Natural killer cell (primary cell): ENCODE measurements at regions of chr1 and their contacts with region 1.

Region 1: GRCh38 chr1:154936555-154937084 is at the start of gene PMVK:
- DNase-seq: peak; percentile 91 to 98
- ATAC-seq: peak; percentile 86 to 97 (median 87)
- H3K4me3 ChIP-seq: peak within 1 kb of the TSS; percentile 85
- H3K4me3 Mint-ChIP-seq: peak within 1 kb of the TSS; percentile 100
- H3K27ac ChIP-seq: peak within 1 kb of the TSS; percentile 97
- H3K27ac Mint-ChIP-seq: peak within 1 kb of the TSS; percentile 99 to 100
- H3K4me1 ChIP-seq: peaks cover 36% of the 10 kb centered on the region
- H3K4me1 Mint-ChIP-seq: peaks cover 19 to 40% of the 10 kb centered on the region in 2 donors
- H3K27me3 ChIP-seq: no peaks in the 10 kb centered on the region
- H3K27me3 Mint-ChIP-seq: no peaks in the 10 kb centered on the region
- CTCF ChIP-seq: no peak
- total RNA-seq, gene PMVK: 9.0 to 12.1 (median 11.0) TPM

Region 2: GRCh38 chr1:154955718-154956543 is 19.3 kb after region 1 on chr1 and contains the start of gene PBXIP1:
- intact Hi-C with region 1: loop called (anchors 1 kb)
- DNase-seq: peak; percentile 79 to 95
- ATAC-seq: peak; percentile 69 to 77 (median 71)
- H3K4me3 ChIP-seq: peak within 1 kb of the TSS; percentile 72
- H3K4me3 Mint-ChIP-seq: peak within 1 kb of the TSS; percentile 94
- H3K27ac ChIP-seq: peak within 1 kb of the TSS; percentile 95
- H3K27ac Mint-ChIP-seq: peak within 1 kb of the TSS; percentile 89 to 94
- H3K4me1 ChIP-seq: peaks cover 61% of the 10 kb centered on the region
- H3K4me1 Mint-ChIP-seq: peaks cover 58 to 60% of the 10 kb centered on the region in 2 donors
- H3K27me3 ChIP-seq: no peaks in the 10 kb centered on the region
- H3K27me3 Mint-ChIP-seq: no peaks in the 10 kb centered on the region
- CTCF ChIP-seq: no peak
- total RNA-seq, gene PBXIP1: 158 to 200 (median 197) TPM

Region 3: DNA sequence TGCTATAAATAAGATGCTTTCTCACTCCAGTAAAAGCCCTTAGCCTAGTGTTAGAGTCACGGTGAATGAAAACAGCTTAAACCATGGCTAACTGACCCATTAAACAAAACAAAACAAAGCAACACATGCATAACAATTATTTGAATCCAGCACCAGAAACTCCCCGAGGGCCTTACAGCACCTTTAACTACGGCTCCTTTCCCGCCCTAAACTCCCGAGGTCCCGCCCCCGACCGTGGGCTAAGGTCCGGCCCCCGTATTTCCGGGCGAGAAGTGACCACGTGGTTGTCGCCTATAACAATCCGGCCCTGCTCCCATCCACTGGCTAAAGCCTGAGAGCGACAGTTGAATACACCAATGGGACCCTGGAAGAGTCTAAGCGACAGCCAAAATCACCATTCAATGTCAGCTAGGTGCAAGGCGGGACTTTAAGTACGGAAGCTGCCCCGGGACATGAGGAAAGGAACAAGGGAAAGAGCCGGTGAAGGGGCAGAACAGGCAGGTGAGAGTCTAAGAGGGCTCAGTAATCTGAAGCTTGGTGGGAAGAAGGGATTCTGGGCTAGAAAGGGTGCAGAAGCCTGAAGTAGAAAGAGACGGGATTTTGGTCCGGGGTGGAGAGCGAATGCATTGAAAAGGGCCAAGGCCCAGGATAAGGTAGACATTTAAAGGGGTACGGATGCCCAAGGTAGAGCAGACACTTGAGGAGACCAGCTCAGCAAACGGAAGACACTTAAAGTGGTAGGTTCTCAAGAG is 46.5 kb after region 1 on chr1 and contains the start of gene FLAD1:
- intact Hi-C with region 1: loop called (anchors 1 kb)
- DNase-seq: peak; percentile 85 to 99
- ATAC-seq: peak; percentile 98 to 100 (median 99)
- H3K4me3 ChIP-seq: peak within 1 kb of the TSS; percentile 59
- H3K4me3 Mint-ChIP-seq: no peak within 1 kb of the TSS
- H3K27ac ChIP-seq: peak within 1 kb of the TSS; percentile 51
- H3K27ac Mint-ChIP-seq: no peak within 1 kb of the TSS
- H3K4me1 ChIP-seq: peaks cover 16% of the 10 kb centered on the region
- H3K4me1 Mint-ChIP-seq: peaks cover 0 to 6% of the 10 kb centered on the region in 2 donors
- H3K27me3 ChIP-seq: no peaks in the 10 kb centered on the region
- H3K27me3 Mint-ChIP-seq: no peaks in the 10 kb centered on the region
- CTCF ChIP-seq: no peak
- total RNA-seq, gene FLAD1: 32.1 to 47.6 (median 38.7) TPM

Region 4: DNA sequence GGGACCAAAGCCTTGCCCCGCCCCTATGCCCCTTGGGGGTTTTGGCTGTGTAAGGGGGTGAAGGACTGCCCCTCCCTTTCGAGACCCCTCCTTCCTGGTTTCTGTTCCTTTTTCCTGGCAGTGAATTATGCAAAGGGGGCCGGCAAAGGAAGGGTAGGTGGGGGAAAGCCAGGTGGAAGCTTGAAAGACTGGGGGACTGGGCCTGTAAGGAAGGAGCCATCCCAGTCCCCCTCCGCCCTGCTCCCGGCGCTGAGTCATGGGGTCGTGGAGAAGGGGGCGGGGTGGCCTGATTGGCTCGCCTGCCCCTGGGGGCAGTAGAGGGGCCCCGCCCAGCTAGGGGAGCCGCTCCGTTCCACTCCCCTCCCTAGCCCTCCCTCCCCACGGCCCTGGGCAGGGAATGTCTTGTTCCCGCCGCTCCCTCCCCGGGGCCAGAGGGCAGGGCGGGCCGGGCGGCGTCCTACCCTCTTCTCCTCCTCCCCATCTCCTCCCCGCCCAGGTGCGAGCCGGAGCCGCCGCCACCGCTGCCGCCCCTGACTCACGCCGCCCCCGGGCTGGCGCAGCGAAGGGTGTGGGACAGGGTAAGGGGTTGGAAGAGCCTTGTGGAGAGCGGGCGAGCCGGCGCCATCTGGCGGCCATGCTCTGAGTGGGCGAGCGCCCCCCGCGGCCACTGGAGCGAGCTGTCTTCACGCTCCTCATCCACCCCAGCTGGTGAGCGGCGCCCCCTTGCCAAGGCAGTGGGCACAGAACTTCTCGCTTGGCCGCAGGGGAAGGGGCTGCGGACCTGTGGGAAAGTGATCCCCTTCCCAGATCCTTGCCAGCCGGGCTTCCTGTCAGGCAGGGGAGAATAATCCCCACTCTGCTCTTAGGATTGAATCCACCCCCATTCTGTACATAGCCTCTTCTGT is 80.7 kb after region 1 on chr1:
- intact Hi-C with region 1: loop called (anchors 1 kb)
- DNase-seq: peak; percentile 88 to 94
- ATAC-seq: peak; percentile 99
- H3K4me3 ChIP-seq: peak overlapping the region; percentile 13
- H3K4me3 Mint-ChIP-seq: peak overlapping the region; percentile 52
- H3K27ac ChIP-seq: peak overlapping the region; percentile 68
- H3K27ac Mint-ChIP-seq: peak overlapping the region; percentile 27 to 50
- H3K4me1 ChIP-seq: peaks cover 58% of the 10 kb centered on the region
- H3K4me1 Mint-ChIP-seq: peaks cover 17 to 46% of the 10 kb centered on the region in 2 donors
- H3K27me3 ChIP-seq: no peaks in the 10 kb centered on the region
- H3K27me3 Mint-ChIP-seq: no peaks in the 10 kb centered on the region
- CTCF ChIP-seq: peak; percentile 100